Activated CD8-positive, alpha-beta memory T cell treated with anti-CD3 and anti-CD28 coated beads, Interleukin-2, amount 10 ng/mL, durations not matched to agents 7 days and 5 days (primary cell): ENCODE measurements at regions of chr19 and their contacts with region 1.

Region 1: DNA sequence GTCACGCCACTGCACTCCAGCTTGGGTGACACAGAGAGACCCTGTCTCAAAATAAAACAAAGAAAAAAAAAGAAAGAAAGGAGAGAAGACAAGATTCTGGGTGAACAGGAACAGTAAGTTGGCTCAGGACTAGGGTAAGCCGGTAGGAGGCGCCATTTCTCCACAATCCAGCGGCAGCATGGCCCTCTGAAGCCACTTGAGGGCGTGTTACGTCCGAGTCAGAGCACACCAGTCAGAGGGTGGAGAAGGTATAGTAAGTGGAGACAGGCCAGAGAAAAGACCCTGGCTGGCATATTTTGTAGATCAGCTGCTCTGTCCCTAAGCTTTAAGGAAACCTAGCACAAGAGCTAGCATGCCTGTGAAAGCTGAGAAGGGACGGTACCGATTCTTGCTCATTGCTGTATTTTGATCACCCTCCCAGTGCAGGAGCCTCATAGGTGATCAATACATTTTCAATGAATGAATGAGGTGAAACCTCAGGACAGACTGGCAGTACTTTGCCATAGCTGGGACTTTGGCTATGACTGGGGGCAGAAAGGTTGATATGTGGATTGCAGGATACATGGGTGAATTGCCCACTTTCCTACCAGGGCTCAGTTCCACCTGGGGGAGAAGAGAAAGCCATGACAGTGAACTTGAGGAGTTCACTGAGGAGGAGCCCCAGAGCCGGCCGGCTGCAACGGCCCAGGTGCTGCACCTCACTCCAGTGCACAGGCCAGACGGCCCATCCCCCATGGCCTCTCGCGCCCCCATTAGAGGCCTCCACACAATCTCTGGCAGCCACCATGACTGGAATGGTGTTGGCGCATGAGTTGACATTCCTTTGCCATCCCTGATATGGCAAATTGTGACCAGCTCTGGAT is 23.5 kb downstream of the POU2F2 start:
- DNase-seq: peak; percentile 93
- ATAC-seq: peak; percentile 96
- H3K4me3 Mint-ChIP-seq: no peak overlapping the region
- H3K27ac Mint-ChIP-seq: peak overlapping the region; percentile 38
- H3K4me1 Mint-ChIP-seq: peaks cover 28% of the 10 kb centered on the region
- H3K27me3 Mint-ChIP-seq: no peaks in the 10 kb centered on the region

Region 2: GRCh38 chr19:42095814-42096230 is 12.9 kb before region 1 on chr19:
- CTCF ChIA-PET with region 1: interaction called, 18 read pairs
- DNase-seq: no peak
- ATAC-seq: no peak
- H3K4me3 Mint-ChIP-seq: no peak overlapping the region
- H3K27ac Mint-ChIP-seq: no peak overlapping the region
- H3K4me1 Mint-ChIP-seq: peaks cover 12% of the 10 kb centered on the region
- H3K27me3 Mint-ChIP-seq: no peaks in the 10 kb centered on the region

Region 3: DNA sequence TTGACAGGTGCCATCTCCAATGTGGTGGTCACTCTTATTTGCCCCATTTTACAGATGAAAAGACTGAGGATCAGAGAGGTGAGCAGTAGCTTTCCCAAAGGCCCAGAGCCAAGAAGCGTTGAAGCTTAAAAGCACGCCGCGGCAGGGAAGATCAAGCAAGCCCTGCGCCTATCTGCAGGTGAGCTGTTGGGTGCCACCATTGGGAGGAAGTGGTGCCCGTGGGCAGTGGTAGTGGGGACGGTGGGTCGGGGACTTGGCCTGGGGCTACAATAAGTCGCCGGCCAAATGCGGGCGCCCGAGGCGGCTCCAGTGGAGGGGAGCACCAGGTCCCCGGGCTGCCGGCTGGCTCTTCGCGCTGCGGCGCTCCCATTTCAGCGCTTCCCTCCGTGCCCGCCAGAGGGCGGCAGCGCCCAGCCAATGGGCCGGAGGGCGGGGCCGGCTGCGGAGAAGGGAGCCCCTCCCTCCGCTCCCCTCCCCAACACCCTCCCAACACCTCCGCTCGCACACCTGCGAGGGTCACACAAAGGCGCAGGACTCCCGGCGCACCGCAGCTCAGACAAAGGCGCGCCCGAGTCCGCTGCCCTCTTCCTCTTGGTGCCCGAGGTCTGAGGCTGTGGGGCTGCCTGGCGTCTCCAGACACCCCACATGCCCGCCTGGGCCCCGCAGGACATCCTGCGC is 24.2 kb after region 1 on chr19:
- CTCF ChIA-PET with region 1: interaction called, 26 read pairs
- DNase-seq: peak; percentile 82
- ATAC-seq: peak; percentile 73
- H3K4me3 Mint-ChIP-seq: peak overlapping the region; percentile 70
- H3K27ac Mint-ChIP-seq: peak overlapping the region; percentile 77
- H3K4me1 Mint-ChIP-seq: peaks cover 46% of the 10 kb centered on the region
- H3K27me3 Mint-ChIP-seq: no peaks in the 10 kb centered on the region

Region 4: GRCh38 chr19:42176990-42177685 is 68.4 kb after region 1 on chr19:
- CTCF ChIA-PET with region 1: interaction called, 52 read pairs
- DNase-seq: peak; percentile 80
- ATAC-seq: peak; percentile 94
- H3K4me3 Mint-ChIP-seq: no peak overlapping the region
- H3K27ac Mint-ChIP-seq: no peak overlapping the region
- H3K4me1 Mint-ChIP-seq: peaks cover 9% of the 10 kb centered on the region
- H3K27me3 Mint-ChIP-seq: peaks cover 31% of the 10 kb centered on the region

Region 5: DNA sequence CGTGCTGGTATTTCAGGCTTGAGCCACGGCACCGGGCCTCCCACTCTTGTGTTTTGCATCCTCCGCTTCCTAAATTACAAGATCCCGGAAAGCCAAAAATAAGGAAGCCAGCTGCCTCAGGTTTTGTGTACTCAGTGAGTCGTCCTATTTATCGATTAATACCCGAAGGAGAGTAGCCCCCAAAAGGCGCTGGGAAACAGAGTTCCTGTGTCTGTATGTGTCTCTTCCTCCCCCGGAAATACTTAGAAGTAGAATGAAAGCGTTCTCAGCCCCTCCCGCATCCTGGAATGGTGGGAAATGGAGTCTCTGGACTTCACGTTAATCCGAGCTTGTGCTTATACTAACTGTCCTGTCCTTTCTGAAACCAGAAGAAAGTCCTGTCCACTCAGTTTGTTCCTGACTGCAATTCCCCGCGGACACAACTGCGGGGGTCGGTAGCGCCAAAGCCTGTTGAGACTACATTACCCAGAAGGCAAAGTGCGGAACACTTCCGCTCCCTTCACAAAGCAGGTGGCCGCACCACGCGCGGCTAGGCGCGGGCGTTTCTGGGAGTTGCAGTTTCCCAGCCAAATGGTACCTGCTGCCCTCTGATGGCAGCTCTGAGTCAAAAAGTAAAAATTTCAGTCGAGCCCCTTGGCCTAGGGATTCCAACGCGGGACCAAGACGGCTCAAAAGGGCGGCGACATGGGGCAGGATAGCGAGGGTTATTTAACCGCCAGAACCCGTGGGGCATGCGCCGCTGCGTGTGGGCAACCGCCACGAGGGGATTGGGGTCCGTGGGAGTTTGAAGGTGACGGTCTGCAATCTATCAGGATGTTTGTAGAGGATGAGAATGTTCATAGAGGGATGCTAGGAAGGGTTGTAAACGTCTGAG is 135.8 kb after region 1 on chr19:
- CTCF ChIA-PET with region 1: interaction called, 23 read pairs
- DNase-seq: peak; percentile 97
- ATAC-seq: peak; percentile 56
- H3K4me3 Mint-ChIP-seq: peak overlapping the region; percentile 90
- H3K27ac Mint-ChIP-seq: peak overlapping the region; percentile 95
- H3K4me1 Mint-ChIP-seq: peaks cover 30% of the 10 kb centered on the region
- H3K27me3 Mint-ChIP-seq: no peaks in the 10 kb centered on the region

Region 6: DNA sequence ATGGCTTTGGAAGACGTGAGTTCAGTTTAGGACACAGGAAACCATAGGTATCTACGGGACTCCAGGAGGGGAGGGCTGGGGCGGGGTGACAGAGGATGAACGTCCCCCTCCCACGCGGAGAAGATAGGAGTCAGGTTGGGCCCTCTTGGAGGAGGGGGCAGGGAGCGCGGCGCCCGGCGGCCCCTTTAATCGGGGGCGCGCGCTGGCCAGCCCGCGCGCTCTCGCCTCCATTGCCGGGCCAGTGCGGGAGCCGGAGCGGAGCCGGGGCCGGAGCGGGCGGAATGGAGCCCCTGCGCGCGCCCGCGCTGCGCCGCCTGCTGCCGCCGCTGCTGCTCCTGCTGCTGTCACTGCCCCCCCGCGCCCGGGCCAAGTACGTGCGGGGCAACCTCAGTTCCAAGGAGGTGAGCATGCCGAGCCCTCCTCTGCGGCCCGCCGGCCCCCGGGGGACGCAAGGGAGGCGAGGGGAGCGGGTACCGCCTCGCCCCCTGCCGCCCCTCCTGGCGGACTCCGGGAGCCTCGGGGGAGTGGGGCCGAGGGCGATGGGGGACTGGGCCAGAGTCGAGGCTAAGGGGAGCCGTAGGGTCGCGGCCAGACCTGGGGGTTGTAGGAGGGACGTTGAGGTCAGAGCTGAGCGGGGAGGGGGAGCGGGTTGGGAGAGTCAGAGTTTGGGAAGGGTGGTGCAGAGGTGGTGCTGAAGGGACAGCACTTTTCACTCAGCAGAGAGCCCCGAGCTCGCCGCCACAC is 204.5 kb after region 1 on chr19 and contains the start of gene TMEM145:
- CTCF ChIA-PET with region 1: interaction called, 10 read pairs
- DNase-seq: peak; percentile 54
- ATAC-seq: peak; percentile 78
- H3K4me3 Mint-ChIP-seq: peak within 1 kb of the TSS; percentile 51
- H3K27ac Mint-ChIP-seq: no peak within 1 kb of the TSS
- H3K4me1 Mint-ChIP-seq: peaks cover 21% of the 10 kb centered on the region
- H3K27me3 Mint-ChIP-seq: peaks cover 42% of the 10 kb centered on the region
- total RNA-seq, gene TMEM145: 0.15 to 1.1 TPM